ENCODE measurements at regions of chr2 and their contacts with region 1.

Region 1: DNA sequence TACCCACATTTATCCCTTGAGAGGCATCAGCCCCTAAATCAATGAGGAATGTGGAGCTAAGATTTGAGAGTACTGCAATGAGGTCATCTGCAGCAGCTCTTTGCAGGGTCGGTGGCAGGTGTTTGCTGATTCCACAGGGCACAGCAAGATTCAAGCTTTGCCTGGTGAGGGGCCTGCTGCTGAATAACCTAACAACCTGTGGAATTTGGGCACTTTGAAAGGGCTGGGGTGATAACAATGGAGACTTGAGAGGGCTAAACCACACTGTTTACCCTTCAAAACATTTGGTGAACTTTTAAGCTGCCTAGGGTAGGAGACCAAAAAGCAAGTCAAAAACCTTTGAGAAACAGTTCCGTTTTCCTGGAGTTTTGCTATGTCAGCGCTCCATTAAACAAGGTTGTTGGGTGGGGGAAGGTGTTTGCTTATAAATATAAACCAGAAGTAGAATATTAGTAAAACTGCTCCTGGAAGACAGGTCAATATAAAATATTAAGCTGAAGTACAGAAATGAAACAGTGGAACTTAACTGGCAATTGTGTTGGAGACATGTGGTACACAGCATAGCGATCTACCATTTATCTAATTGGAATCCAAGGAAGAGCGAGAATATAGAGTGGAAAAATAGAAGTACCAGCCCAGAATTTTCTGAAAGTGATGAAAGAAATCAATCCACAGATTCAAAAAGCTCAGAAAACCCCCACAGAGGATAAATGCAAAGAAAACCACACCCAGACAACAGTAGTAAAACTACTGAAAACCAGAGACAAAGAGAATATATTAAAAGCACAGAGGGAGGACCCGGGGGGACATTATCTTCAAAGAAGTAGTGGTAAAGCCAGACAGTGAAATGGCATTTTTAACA is 15.7 kb downstream of the COPS8 start:
- DNase-seq: no peak
- ATAC-seq: no peak
- H3K4me3 ChIP-seq: no peak overlapping the region
- H3K27ac ChIP-seq: no peak overlapping the region
- H3K4me1 ChIP-seq: peaks cover 42% of the 10 kb centered on the region
- H3K27me3 ChIP-seq: no peaks in the 10 kb centered on the region
- CTCF ChIP-seq: no peak

Region 2: GRCh38 chr2:236824877-236825692 is 276.3 kb before region 1 on chr2:
- intact Hi-C with region 1: no loop called
- DNase-seq: no peak
- ATAC-seq: peak in 1 of 4 donors; percentile 45
- H3K4me3 ChIP-seq: no peak overlapping the region
- H3K27ac ChIP-seq: no peak overlapping the region
- H3K4me1 ChIP-seq: peaks cover 9% of the 10 kb centered on the region
- H3K27me3 ChIP-seq: no peaks in the 10 kb centered on the region
- CTCF ChIP-seq: no peak

Region 3: GRCh38 chr2:237115870-237116269 is 14.5 kb after region 1 on chr2:
- intact Hi-C with region 1: loop called in 1 of 2 experiments (anchors 2 kb)
- DNase-seq: no peak
- ATAC-seq: peak; percentile 65 to 89 (median 78)
- H3K4me3 ChIP-seq: no peak overlapping the region
- H3K27ac ChIP-seq: no peak overlapping the region
- H3K4me1 ChIP-seq: no peaks in the 10 kb centered on the region
- H3K27me3 ChIP-seq: no peaks in the 10 kb centered on the region
- CTCF ChIP-seq: no peak